ENCODE measurements at regions of chr2 and their contacts with region 1.

Region 1: DNA sequence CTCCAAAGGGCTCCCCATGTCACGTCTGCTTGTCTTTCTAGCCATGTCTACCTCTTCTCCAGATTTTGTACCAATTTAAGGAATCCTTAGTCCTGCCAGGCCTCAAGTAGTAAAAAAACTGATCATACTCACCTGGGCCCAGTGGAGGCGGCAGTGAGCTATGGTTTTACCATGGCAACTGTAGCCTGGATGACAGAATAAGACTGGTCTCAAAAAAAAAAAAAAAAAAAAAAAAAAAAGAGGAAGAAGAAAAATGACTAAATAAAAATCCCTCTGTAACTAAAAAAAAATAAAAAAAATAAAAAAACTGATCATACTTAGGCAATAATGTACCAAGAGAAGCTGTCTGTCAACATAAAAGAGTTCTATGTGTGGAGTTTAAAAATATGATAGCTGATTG is 221.6 kb downstream of the NR4A2 start:
- DNase-seq: peak; percentile 49
- ATAC-seq: peak; percentile 28; the same call in 1 of the 2 replicates
- H3K4me3 ChIP-seq: no peak overlapping the region
- H3K27ac ChIP-seq: no peak overlapping the region
- H3K4me1 ChIP-seq: peaks cover 13% of the 10 kb centered on the region
- H3K27me3 ChIP-seq: no peaks in the 10 kb centered on the region
- CTCF ChIP-seq: peak; percentile 57

Region 2: GRCh38 chr2:155382776-155383175 is 728.1 kb before region 1 on chr2:
- CTCF ChIA-PET with region 1: no interaction called
- POLR2A ChIA-PET with region 1: no interaction called
- intact Hi-C with region 1: loop called (anchors 10 kb)
- DNase-seq: no peak
- ATAC-seq: no peak
- H3K4me3 ChIP-seq: no peak overlapping the region
- H3K27ac ChIP-seq: no peak overlapping the region
- H3K4me1 ChIP-seq: no peaks in the 10 kb centered on the region
- H3K27me3 ChIP-seq: 0 out of 2 replicates have a peak, but pooled peaks cover 5% of the 10 kb centered on the region
- CTCF ChIP-seq: no peak

Region 3: GRCh38 chr2:155574941-155575340 is 535.9 kb before region 1 on chr2:
- CTCF ChIA-PET with region 1: no interaction called
- POLR2A ChIA-PET with region 1: no interaction called
- intact Hi-C with region 1: no loop called
- DNase-seq: no peak
- ATAC-seq: no peak
- H3K4me3 ChIP-seq: no peak overlapping the region
- H3K27ac ChIP-seq: no peak overlapping the region
- H3K4me1 ChIP-seq: no peaks in the 10 kb centered on the region
- H3K27me3 ChIP-seq: no peaks in the 10 kb centered on the region
- CTCF ChIP-seq: no peak

Region 4: DNA sequence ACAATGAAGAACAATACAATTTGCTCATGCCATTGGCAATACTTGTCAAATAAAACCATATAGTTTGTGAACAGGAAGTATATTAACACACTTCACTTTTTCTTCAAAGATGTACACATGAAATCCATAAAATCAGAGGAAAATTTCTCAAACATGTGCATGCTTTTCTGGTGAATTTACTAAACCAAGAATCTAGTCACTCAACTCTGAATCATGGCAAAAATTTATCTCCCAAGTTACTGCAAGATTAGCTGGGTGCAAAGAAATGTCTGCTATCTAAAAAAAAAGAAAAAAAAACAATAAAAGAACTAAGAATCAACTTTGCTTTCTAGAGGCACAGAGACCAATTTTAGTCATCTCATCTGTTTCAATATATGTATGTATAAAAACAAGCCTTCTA is 197.5 kb before region 1 on chr2:
- CTCF ChIA-PET with region 1: no interaction called
- POLR2A ChIA-PET with region 1: no interaction called
- intact Hi-C with region 1: loop called (anchors 10 kb)
- DNase-seq: no peak
- ATAC-seq: no peak
- H3K4me3 ChIP-seq: no peak overlapping the region
- H3K27ac ChIP-seq: no peak overlapping the region
- H3K4me1 ChIP-seq: no peaks in the 10 kb centered on the region
- H3K27me3 ChIP-seq: no peaks in the 10 kb centered on the region
- CTCF ChIP-seq: no peak

Region 5: GRCh38 chr2:156087875-156088274 is 23.0 kb before region 1 on chr2:
- CTCF ChIA-PET with region 1: no interaction called
- POLR2A ChIA-PET with region 1: no interaction called
- intact Hi-C with region 1: no loop called
- DNase-seq: peak; percentile 59
- ATAC-seq: peak; percentile 45
- H3K4me3 ChIP-seq: no peak overlapping the region
- H3K27ac ChIP-seq: peak overlapping the region; percentile 56
- H3K4me1 ChIP-seq: peaks cover 42% of the 10 kb centered on the region
- H3K27me3 ChIP-seq: no peaks in the 10 kb centered on the region
- CTCF ChIP-seq: no peak

Region 6: DNA sequence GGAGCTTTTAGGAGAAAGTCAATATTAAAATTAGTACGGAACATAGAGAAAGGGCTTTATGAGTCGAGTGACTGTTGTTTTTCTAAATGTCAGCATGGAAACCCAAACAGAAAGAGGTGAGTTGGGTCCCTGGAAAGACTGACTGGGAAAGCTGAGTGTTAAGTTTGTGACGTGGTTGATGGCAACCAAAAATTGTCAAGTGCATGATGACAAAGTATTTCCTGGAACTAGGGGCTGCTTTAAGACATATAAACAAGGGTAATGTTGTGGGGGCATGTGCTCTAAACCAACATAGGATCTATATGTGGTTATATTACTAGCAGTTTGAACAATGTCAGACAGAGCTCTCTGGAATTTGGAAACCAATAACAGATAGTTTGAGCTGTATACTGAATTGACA is 274.4 kb after region 1 on chr2:
- CTCF ChIA-PET with region 1: no interaction called
- POLR2A ChIA-PET with region 1: no interaction called
- intact Hi-C with region 1: no loop called
- DNase-seq: no peak
- ATAC-seq: no peak
- H3K4me3 ChIP-seq: no peak overlapping the region
- H3K27ac ChIP-seq: no peak overlapping the region
- H3K4me1 ChIP-seq: no peaks in the 10 kb centered on the region
- H3K27me3 ChIP-seq: 0 out of 2 replicates have a peak, but pooled peaks cover 4% of the 10 kb centered on the region
- CTCF ChIP-seq: no peak

Measured in PC-3 (cell line).